ENCODE measurements at regions of chr15 and their contacts with region 1.

Region 1: DNA sequence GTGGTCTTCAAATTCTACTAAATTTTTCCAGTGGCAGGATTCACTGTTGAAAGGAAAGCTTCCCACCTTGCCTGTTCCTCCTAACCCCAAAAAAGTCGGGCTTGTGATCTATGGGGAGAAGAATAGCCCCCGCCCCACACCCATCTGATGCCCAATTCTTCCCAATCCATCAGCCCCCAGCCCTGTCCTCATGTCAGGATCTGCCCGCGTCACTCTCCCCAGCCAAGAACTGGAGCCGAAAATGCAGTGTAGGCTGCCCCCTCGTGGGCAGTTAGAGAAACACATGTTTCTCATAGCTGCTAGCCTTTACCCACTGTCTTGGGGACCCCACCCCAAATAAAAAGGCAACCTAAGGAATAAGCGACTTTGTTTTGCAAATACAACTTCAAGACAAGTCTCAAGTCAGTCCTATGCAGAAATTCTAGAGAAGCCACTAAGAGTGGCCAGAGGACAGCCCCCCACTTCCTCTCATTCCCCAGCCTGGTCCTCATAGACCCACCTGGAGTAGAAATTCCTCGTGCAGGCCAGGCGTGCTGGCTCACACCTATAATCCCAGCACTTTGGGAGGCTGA is 13.0 kb upstream of the CSK start:
- DNase-seq: peak; percentile 82
- H3K27ac ChIP-seq: no peak overlapping the region
- CTCF ChIP-seq: peak; percentile 90

Region 2: DNA sequence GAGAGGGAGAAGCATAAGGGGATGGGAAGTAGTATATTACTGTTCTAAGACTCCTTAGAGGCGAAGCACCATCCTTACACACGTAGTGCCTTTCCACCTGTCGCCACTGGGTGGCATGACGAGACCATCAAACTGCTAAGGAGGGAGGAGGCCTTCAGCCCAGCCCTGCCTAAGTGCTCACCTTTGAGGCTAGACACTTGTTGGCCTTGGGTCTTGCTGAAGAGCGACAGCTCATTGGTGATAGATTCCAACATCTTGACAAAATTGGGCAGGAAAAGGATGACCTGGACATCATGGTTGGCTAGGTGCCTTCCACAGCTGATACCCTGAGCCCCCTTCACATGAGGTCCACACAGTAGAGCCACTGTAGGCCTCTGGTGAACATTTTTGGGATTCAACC is 133.6 kb before region 1 on chr15:
- CTCF ChIA-PET with region 1: interaction called, 258 read pairs
- POLR2A ChIA-PET with region 1: no interaction called
- DNase-seq: peak; percentile 82
- H3K27ac ChIP-seq: no peak overlapping the region
- CTCF ChIP-seq: peak; percentile 92

Region 3: GRCh38 chr15:74750751-74751150 is 18.1 kb before region 1 on chr15:
- CTCF ChIA-PET with region 1: interaction called, 10 read pairs
- POLR2A ChIA-PET with region 1: no interaction called
- DNase-seq: no peak
- H3K27ac ChIP-seq: no peak overlapping the region
- CTCF ChIP-seq: no peak

Region 4: GRCh38 chr15:74799856-74800547 is 31.1 kb after region 1 on chr15:
- CTCF ChIA-PET with region 1: interaction called, 43 read pairs
- POLR2A ChIA-PET with region 1: no interaction called
- DNase-seq: peak; percentile 98
- H3K27ac ChIP-seq: peak overlapping the region; percentile 93
- CTCF ChIP-seq: peak; percentile 98

Region 5: GRCh38 chr15:74842581-74843444 is 74.0 kb after region 1 on chr15 and contains the start of gene ULK3:
- CTCF ChIA-PET with region 1: interaction called, 12 read pairs
- POLR2A ChIA-PET with region 1: no interaction called
- DNase-seq: peak; percentile 94
- H3K27ac ChIP-seq: peak within 1 kb of the TSS; percentile 81
- CTCF ChIP-seq: peak; percentile 98

Region 6: GRCh38 chr15:74956648-74957300 is 187.9 kb after region 1 on chr15 and contains the start of gene RPP25:
- CTCF ChIA-PET with region 1: interaction called, 13 read pairs
- POLR2A ChIA-PET with region 1: no interaction called
- DNase-seq: peak; percentile 87
- H3K27ac ChIP-seq: peak within 1 kb of the TSS; percentile 93
- CTCF ChIP-seq: no peak